CD14-positive monocyte (primary cell): ENCODE measurements at regions of chr16 and their contacts with region 1.

Region 1: GRCh38 chr16:84970447-84971127 is 40.7 kb downstream of the ZDHHC7 start:
- DNase-seq: peak; percentile 74 to 85 (median 76)
- H3K4me3 ChIP-seq: no peak overlapping the region
- H3K4me3 Mint-ChIP-seq: no peak overlapping the region
- H3K27ac ChIP-seq: no peak overlapping the region
- H3K27ac Mint-ChIP-seq: peak overlapping the region in 1 of 7 donors; percentile 50
- H3K4me1 ChIP-seq: peaks cover 21 to 30% of the 10 kb centered on the region in 2 donors
- H3K4me1 Mint-ChIP-seq: peaks cover 30% of the 10 kb centered on the region
- H3K27me3 ChIP-seq: no peaks in the 10 kb centered on the region
- H3K27me3 Mint-ChIP-seq: peaks cover 2 to 9% (median 4%) of the 10 kb centered on the region in 3 donors
- CTCF ChIP-seq: peak; percentile 95

Region 2: DNA sequence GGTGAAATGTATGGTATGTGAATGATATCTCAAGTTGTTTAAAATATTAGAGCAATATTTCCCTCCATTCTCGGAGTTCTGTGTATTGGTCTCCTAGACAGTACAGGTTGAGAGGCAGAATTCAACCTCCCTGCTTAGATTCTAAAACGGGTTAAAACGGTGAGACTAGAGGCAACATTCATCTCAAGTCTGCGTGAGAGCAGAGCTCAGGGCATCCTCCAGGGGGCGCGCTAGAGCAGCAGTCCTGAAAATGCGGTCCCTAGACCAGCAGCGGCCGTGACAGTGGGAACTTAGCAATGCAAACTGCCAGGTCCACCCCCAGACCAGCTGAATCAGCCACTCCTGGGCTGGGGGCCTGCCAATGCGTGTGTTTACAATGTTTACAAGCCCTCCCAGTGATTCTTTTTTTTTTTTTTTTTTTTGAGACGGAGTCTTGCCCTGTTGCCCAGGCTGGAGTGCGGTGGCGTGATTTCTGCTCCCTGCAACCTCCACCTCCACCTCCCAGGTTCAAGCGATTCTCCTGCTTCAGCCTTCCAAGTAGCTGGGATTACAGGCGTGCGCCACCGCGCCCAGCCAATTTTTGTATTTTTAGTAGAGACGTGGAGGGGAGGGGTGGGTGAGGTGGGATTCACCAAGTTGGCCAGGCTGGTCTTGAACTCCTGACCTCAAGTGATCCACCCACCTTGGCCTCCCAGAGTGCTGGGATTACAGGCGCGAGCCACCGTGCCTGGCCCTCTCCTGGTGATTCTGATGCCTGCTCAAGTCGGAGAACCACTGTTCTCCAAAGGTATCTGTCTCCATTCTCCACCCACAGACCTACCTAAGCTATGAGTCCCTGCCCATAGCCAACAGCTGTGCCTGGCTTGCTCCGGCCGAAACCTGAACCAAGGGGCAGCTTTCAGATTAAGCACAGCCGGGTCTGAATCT is 298.0 kb before region 1 on chr16:
- intact Hi-C with region 1: loop called in 1 of 2 experiments (anchors 10 kb)
- DNase-seq: peak; percentile 74 to 86 (median 80)
- H3K4me3 ChIP-seq: no peak overlapping the region
- H3K4me3 Mint-ChIP-seq: peak overlapping the region in 1 of 2 donors; percentile 42
- H3K27ac ChIP-seq: no peak overlapping the region
- H3K27ac Mint-ChIP-seq: no peak overlapping the region
- H3K4me1 ChIP-seq: peaks cover 4 to 12% of the 10 kb centered on the region in 2 donors
- H3K4me1 Mint-ChIP-seq: peaks cover 16% of the 10 kb centered on the region
- H3K27me3 ChIP-seq: no peaks in the 10 kb centered on the region
- H3K27me3 Mint-ChIP-seq: peaks cover 0 to 11% (median 3%) of the 10 kb centered on the region in 3 donors
- CTCF ChIP-seq: peak; percentile 86

Region 3: DNA sequence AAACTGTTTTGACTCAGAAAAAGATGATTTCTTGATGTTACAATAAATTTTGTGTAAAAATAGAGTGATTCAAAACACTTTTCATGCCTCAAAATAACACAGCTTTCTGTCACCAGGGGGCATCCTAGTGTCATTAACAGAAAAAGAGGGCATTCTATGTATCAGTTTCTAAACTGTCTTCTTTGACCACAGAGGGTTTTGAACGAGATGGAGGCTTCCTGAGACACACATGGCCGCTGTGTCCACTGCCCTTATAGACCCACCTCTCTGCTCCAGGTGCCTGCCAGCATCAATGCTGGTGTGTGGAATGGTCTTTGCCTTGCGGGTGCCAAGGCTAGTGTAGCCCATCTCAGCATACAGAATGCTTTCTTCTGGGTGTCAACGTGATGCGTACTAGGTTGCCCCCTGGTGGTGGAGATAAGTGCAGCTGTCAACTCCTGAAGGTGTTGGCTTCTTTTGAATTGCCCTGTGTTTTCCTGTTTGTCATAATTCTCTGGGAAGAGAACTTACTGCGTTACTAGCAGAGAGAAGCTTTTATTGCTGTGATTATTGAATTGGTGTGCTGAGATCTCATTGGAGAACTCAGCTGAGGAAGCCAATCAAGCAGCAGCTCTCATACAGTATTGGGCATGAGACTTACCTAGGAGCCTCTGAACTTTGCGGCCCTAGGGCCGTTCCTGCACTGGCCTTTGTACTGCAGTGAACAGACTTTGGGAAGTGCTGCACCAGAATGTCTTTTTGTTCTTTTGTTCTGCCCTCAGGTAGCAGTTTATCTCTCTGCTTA is 232.1 kb before region 1 on chr16:
- intact Hi-C with region 1: loop called (anchors 1 to 5 kb)
- DNase-seq: peak; percentile 75 to 82 (median 80)
- H3K4me3 ChIP-seq: peak overlapping the region; percentile 17 to 70 (median 53)
- H3K4me3 Mint-ChIP-seq: peak overlapping the region; percentile 80 to 86
- H3K27ac ChIP-seq: peak overlapping the region in 1 of 2 donors; percentile 77
- H3K27ac Mint-ChIP-seq: peak overlapping the region; percentile 64 to 90 (median 85)
- H3K4me1 ChIP-seq: peaks cover 59 to 62% of the 10 kb centered on the region in 2 donors
- H3K4me1 Mint-ChIP-seq: peaks cover 51% of the 10 kb centered on the region
- H3K27me3 ChIP-seq: no peaks in the 10 kb centered on the region
- H3K27me3 Mint-ChIP-seq: peaks cover 0 to 2% (median 0%) of the 10 kb centered on the region in 3 donors
- CTCF ChIP-seq: peak; percentile 99

Region 4: GRCh38 chr16:84925092-84925772 is 45.4 kb before region 1 on chr16:
- intact Hi-C with region 1: loop called (anchors 2 to 5 kb)
- DNase-seq: peak; percentile 42 to 71 (median 67)
- H3K4me3 ChIP-seq: no peak overlapping the region
- H3K4me3 Mint-ChIP-seq: no peak overlapping the region
- H3K27ac ChIP-seq: no peak overlapping the region
- H3K27ac Mint-ChIP-seq: no peak overlapping the region
- H3K4me1 ChIP-seq: peaks cover 4 to 28% of the 10 kb centered on the region in 2 donors
- H3K4me1 Mint-ChIP-seq: peaks cover 19% of the 10 kb centered on the region
- H3K27me3 ChIP-seq: no peaks in the 10 kb centered on the region
- H3K27me3 Mint-ChIP-seq: peaks cover 4 to 9% (median 7%) of the 10 kb centered on the region in 3 donors
- CTCF ChIP-seq: peak; percentile 98